Common myeloid progenitor, CD34-positive (primary cell): ENCODE measurements at regions of chr9 and their contacts with region 1.

Region 1: GRCh38 chr9:69056191-69056815 is 20.8 kb downstream of the FXN start:
- DNase-seq: peak in 2 of 3 donors; percentile 30 to 46
- H3K4me3 ChIP-seq: no peak overlapping the region
- H3K27ac ChIP-seq: no peak overlapping the region
- H3K4me1 ChIP-seq: peaks cover 0 to 12% (median 5%) of the 10 kb centered on the region in 4 experiments
- H3K27me3 ChIP-seq: no peaks in the 10 kb centered on the region

Region 2: GRCh38 chr9:68996462-68996861 is 59.8 kb before region 1 on chr9:
- CTCF ChIA-PET with region 1: no interaction called
- POLR2A ChIA-PET with region 1: no interaction called
- DNase-seq: peak in 2 of 3 donors; percentile 63 to 68
- H3K4me3 ChIP-seq: peak overlapping the region in 4 of 7 experiments; percentile 3 to 52 (median 10)
- H3K27ac ChIP-seq: peak overlapping the region in 1 of 2 experiments; percentile 50
- H3K4me1 ChIP-seq: peaks cover 20 to 47% (median 33%) of the 10 kb centered on the region in 4 experiments
- H3K27me3 ChIP-seq: no peaks in the 10 kb centered on the region

Region 3: DNA sequence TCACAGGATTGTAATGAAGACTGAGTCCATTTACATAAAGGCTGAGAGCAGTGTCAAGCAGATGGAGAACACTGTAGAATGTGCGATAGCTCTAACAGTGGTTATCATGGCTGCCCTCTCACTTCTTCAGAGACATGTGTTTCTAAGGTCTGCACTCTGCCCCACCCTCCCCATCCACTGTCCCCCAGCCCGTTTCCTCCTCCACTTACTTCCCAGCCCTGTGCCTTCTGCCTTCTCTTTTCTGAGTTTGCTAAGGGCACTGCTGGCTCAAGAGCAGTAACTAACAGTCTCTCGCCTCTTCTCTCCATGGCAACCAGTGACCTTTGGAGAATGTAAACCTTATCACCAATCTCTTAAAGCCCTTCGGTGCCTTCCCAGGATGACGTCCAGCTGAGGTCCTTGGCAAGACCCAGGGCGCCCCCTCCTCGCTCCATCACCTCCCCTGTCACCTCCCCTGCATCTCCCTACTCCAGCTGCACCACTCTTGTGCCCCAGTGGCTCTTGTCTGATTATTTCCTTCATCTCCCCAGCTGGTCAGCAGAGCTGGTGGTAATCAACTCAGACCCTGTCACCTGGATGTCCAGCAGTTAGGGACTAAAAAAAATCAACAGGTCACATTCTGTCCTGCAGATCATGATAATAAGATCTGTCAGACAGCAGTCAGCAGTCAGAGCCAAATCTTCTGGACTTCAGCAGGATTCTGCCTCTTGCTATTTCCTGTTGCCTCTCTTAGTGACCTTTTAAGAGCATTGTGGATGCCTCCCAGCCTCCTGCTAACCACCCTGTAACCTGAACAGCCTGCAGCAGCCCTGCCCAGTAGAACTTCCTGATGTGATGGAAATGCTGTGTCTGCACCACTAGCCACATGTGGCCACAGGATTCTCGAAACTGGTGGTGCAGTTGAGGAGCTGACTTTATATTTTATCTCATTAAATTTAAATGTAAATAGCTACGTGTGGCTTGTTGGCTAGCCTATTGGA is 11.8 kb before region 1 on chr9:
- CTCF ChIA-PET with region 1: interaction called, 18 read pairs
- POLR2A ChIA-PET with region 1: no interaction called
- DNase-seq: peak in 2 of 3 donors; percentile 24 to 35
- H3K4me3 ChIP-seq: no peak overlapping the region
- H3K27ac ChIP-seq: no peak overlapping the region
- H3K4me1 ChIP-seq: peaks cover 0 to 28% (median 22%) of the 10 kb centered on the region in 4 experiments
- H3K27me3 ChIP-seq: no peaks in the 10 kb centered on the region

Region 4: DNA sequence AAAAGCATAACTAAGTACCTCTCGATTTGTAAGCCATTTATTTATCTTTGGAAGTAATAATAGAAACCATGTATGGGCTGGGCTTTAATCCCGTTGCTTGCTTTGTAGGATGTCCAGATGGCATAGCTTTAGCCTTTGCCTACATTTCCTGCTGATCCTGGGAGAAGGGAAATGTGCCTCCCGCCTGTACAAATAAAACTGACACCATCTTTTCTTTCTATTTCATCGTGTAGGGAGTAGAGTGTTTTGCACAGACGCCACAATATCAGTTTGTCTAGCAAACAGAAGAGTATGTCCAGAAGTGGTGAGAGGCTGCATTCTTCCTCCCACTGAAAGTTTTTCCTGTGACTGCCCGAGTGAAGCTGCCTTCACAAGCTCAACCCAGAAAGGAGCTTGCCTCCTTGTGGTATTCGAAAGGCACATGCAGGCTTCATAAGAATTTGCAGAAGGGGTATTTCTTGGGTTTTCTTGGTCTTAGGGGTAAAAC is 93.1 kb after region 1 on chr9:
- CTCF ChIA-PET with region 1: interaction called, 25 read pairs
- POLR2A ChIA-PET with region 1: no interaction called
- DNase-seq: peak; percentile 36 to 64 (median 60)
- H3K4me3 ChIP-seq: peak overlapping the region in 2 of 7 experiments; percentile 16 to 59
- H3K27ac ChIP-seq: no peak overlapping the region
- H3K4me1 ChIP-seq: peaks cover 2 to 9% (median 6%) of the 10 kb centered on the region in 4 experiments
- H3K27me3 ChIP-seq: no peaks in the 10 kb centered on the region

Region 5: GRCh38 chr9:69186841-69187611 is 130.7 kb after region 1 on chr9:
- CTCF ChIA-PET with region 1: interaction called, 244 read pairs
- POLR2A ChIA-PET with region 1: no interaction called
- DNase-seq: peak in 2 of 3 donors; percentile 30 to 54
- H3K4me3 ChIP-seq: peak overlapping the region in 1 of 7 experiments; percentile 1
- H3K27ac ChIP-seq: peak overlapping the region in 1 of 2 experiments; percentile 46
- H3K4me1 ChIP-seq: peaks cover 2 to 39% (median 21%) of the 10 kb centered on the region in 4 experiments
- H3K27me3 ChIP-seq: no peaks in the 10 kb centered on the region